ENCODE measurements at regions of chr4 and their contacts with region 1.

Region 1: DNA sequence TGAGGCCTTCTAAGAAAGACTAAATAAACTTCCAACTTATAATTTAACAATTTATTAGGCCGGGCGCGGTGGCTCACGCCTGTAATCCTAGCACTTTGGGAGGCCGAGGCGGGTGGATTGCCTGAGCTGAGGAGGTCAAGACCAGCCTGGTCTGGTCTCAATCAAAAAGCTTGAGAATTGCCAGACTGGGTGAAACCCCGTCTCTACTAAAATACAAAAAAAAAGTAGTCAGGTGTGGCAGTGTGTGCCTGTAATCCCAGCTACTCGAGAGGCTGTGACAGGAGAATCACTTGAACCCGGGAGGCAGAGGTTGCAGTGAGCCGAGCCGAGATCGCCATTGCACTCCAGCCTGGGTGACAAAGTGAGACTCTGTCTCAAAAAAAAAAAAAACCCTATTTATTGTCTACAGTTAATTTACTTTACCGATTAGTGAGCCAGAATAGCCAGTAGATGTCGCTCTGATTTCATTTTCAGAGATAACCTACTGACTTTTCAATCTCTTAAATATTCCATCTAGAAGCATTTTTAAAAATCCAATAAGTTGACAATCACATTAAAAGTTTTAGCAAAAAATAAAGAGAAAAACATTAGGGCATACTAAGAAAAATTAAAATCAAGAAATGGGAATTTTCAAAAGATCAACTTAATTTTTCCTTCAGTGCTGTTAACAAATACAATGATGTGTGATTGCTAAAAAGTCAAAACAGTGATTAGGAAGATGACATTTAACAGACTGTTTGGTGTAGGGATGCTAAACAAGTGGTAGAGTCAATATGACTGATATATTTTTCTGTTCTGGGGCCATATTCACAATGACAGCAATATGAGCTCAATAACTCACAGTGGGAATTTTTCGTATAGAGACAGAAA is 4.3 kb upstream of the SHROOM3 start:
- DNase-seq: no peak
- ATAC-seq: no peak
- H3K4me3 Mint-ChIP-seq: no peak overlapping the region
- H3K27ac Mint-ChIP-seq: no peak overlapping the region
- H3K4me1 Mint-ChIP-seq: no peaks in the 10 kb centered on the region
- H3K27me3 Mint-ChIP-seq: peaks cover 16% of the 10 kb centered on the region
- CTCF ChIP-seq: peak; percentile 78

Region 2: DNA sequence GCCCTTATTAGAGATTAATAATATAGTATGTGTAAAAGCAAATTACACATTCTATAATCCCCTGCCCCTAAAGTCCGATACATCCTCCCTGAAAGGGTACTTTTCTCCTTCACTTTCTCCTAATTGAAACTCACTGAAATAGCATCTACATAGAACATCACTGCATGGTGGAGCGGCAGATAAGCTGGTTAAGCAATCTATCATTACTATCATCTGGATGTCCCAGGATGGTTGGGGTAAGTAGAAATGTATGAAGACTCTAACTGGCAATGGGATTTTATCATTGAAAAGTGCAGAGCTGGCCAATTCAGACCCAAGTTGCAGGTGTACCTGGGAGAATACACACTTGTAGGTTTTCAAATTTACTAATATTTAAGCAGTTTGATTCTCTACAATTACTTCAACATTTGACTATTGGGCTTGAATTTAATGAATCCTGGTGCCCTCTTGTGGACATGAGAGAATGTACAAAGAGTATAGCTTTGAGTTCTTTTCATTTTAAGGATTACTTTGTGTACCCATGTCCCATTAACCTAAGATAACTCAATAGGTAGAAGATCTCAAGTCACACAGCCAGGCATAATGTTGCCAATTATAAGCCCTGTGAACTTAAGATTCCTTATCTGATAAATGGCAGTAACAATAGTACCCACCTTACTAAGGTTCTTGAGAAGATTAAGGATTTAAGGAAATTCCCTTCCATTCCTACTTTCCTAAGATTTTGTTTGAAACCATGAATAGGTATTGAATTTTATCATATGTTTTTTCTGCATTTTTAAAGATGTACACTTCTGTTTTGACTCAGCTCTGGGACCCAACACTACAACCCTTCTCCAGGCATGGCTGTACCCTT is 74.1 kb after region 1 on chr4:
- CTCF ChIA-PET with region 1: interaction called, 60 read pairs
- POLR2A ChIA-PET with region 1: no interaction called
- intact Hi-C with region 1: loop called (anchors 2 kb)
- DNase-seq: no peak
- ATAC-seq: peak; percentile 45
- H3K4me3 Mint-ChIP-seq: no peak overlapping the region
- H3K27ac Mint-ChIP-seq: no peak overlapping the region
- H3K4me1 Mint-ChIP-seq: no peaks in the 10 kb centered on the region
- H3K27me3 Mint-ChIP-seq: peaks cover 12% of the 10 kb centered on the region
- CTCF ChIP-seq: peak; percentile 75

Region 3: DNA sequence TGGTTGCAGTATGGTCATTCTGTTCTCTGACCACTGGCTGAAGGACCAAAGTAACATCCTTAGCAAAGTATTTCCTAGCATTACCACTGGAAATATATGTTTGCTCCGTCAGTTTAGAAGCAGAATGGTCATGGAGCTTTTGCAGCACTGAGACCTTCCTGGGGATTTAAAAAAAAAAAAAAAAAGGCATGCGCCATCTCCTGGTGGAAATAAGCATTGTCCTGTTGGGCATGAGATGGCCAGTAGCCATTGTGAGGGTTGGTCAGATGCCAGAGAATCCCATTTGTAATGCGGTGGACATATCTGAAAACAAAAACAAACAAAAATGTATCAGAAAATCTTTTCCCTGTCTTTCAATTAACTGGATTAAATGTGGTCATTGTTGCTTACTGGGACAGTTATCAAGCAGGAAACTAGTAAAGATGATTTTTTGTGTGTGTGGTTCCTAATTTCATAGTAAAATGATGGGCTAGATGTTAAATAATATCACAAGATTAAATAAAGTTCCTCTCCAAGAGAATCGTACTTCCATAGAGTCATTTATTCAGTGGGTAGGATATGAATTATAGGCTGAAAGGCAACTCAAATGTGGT is 327.6 kb after region 1 on chr4:
- CTCF ChIA-PET with region 1: no interaction called
- POLR2A ChIA-PET with region 1: no interaction called
- intact Hi-C with region 1: loop called (anchors 10 kb)
- DNase-seq: no peak
- ATAC-seq: no peak
- H3K4me3 Mint-ChIP-seq: no peak overlapping the region
- H3K27ac Mint-ChIP-seq: no peak overlapping the region
- H3K4me1 Mint-ChIP-seq: peaks cover 9% of the 10 kb centered on the region
- H3K27me3 Mint-ChIP-seq: peaks cover 3% of the 10 kb centered on the region
- CTCF ChIP-seq: peak; percentile 78